ENCODE measurements at regions of chr16 and their contacts with region 1.

Region 1: DNA sequence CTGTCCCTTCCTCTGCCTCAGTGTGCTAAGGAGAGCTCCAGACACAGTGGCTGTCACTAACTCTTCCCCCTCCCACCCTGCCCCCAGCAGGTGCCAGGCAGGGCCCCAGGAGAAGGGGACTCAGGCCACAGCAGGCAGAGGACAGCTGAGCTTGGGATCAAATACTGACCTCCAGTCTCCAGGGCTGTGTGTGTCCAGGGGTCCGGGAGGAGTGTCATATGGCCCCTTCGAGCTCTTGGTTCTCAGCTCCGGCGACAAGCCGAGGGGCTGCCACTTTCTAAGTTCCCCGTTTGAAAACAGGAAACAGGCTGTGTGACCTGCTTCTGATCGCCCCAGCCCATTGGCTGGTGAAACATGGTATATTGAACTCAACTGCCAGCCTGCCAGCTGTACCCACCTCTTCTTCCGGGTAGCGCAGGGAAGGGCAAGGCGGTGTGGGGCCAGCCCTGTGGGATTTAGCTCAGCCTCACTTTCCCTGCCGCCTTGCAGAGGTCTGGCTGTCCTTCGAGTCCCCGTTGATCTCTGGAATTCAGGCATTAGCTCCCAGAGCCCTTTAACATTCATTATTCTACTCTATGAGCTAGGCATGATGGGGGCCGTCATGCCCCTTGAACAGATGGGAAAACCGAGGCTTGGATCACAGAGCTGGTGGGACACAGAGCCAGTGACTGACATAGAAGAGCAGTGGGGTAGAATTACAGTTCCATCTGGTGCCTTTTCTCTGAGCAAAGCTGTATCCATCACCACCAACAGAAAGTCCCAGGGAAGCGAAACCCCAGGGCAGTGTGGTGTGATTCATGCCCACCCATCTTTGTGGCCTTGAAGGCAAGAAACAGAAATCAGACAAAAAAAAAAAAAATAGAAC is at the start of gene SNX20:
- DNase-seq: peak; percentile 49
- ATAC-seq: peak; percentile 78
- H3K4me3 Mint-ChIP-seq: peak within 1 kb of the TSS; percentile 86
- H3K27ac Mint-ChIP-seq: peak within 1 kb of the TSS; percentile 93
- H3K4me1 Mint-ChIP-seq: peaks cover 79% of the 10 kb centered on the region
- H3K27me3 Mint-ChIP-seq: no peaks in the 10 kb centered on the region
- CTCF ChIP-seq: no peak
- total RNA-seq, gene SNX20: 33.1 and 34.5 TPM in 2 replicates

Region 2: GRCh38 chr16:50281964-50282538 is 399.2 kb before region 1 on chr16:
- CTCF ChIA-PET with region 1: no interaction called
- POLR2A ChIA-PET with region 1: no interaction called
- intact Hi-C with region 1: loop called (anchors 5 kb)
- DNase-seq: peak; percentile 74
- ATAC-seq: peak; percentile 86
- H3K4me3 Mint-ChIP-seq: peak overlapping the region; percentile 69
- H3K27ac Mint-ChIP-seq: peak overlapping the region; percentile 100
- H3K4me1 Mint-ChIP-seq: peaks cover 90% of the 10 kb centered on the region
- H3K27me3 Mint-ChIP-seq: no peaks in the 10 kb centered on the region
- CTCF ChIP-seq: no peak

Region 3: DNA sequence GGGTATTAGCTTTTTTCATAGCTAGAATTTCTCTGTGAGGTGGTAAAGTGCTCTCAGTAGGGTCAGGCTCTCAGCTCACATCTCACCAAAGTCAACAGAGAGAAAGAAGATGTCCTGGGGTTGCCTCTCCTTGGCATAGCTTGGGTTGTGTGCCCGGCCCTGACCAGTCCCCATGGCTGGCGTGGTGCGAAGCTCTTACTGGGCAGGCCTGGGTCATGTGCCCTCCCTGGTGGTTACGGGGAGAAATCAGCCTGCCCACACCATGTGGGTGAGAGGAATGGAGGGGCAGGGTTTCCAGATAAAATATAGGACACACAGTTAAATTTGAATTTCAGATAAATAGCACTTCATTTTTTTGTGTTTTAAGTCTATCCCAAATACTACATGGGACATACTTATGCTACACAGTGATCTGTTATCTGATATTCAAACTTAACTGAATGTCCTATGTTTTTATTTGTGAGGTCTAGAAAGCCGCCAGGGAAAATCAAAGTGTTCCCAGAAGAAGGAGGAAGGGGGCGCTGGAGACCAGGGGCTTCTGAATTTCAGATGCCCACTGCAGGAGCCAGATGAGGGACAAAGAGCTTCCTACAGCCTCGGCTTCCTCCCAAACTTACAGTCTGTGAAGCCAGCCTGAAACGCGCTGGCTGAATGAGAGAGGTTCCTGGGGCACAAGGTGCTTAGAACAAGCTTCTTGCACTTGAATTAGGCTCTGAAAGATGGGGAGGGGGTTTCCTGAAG is 87.7 kb before region 1 on chr16:
- CTCF ChIA-PET with region 1: no interaction called
- POLR2A ChIA-PET with region 1: interaction called, 9 read pairs
- intact Hi-C with region 1: loop called (anchors 1 kb)
- DNase-seq: no peak
- ATAC-seq: no peak
- H3K4me3 Mint-ChIP-seq: no peak overlapping the region
- H3K27ac Mint-ChIP-seq: no peak overlapping the region
- H3K4me1 Mint-ChIP-seq: peaks cover 17% of the 10 kb centered on the region
- H3K27me3 Mint-ChIP-seq: no peaks in the 10 kb centered on the region
- CTCF ChIP-seq: no peak

Region 4: GRCh38 chr16:50665128-50665878 is 15.9 kb before region 1 on chr16:
- CTCF ChIA-PET with region 1: interaction called, 45 read pairs
- POLR2A ChIA-PET with region 1: interaction called, 36 read pairs
- intact Hi-C with region 1: loop called (anchors 2 kb)
- DNase-seq: peak; percentile 68
- ATAC-seq: peak; percentile 70
- H3K4me3 Mint-ChIP-seq: peak overlapping the region; percentile 81
- H3K27ac Mint-ChIP-seq: peak overlapping the region; percentile 65
- H3K4me1 Mint-ChIP-seq: peaks cover 23% of the 10 kb centered on the region
- H3K27me3 Mint-ChIP-seq: no peaks in the 10 kb centered on the region
- CTCF ChIP-seq: no peak

Region 5: DNA sequence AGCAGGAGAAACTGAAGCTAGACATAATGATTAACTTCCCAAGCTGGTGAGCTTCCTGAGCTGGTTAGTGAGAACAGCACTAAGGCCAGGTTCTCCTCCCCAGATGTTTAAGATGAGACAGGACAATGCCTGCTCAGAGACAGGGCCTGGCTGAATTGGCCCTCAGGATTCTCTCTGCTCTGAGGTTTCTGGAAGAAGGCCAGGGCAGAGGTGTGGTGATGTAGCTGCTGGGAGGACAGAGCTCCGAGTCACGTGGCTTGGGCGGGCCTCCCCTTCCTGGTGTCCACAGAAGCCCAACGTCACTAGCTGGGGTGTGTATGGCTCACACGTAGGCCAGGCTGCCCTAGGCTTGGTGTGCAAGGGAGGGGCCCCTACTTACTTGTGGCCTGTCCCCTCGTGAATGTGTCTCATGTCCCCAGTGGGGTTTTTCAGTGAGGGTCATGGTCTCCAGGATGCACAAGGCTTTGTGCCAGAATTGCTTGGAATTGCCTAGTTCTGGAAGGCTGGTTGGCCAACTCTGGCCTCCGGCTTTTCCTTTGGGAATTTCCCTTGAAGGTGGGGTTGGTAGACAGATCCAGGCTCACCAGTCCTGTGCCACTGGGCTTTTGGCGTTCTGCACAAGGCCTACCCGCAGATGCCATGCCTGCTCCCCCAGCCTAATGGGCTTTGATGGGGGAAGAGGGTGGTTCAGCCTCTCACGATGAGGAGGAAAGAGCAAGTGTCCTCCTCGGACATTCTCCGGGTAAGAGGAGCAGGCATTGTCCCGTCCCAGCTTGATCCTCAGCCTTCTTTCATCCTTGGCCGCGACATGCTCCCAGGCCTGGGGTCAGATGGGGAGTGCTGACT is 15.5 kb after region 1 on chr16:
- CTCF ChIA-PET with region 1: no interaction called
- POLR2A ChIA-PET with region 1: interaction called, 34 read pairs
- intact Hi-C with region 1: loop called (anchors 1 kb)
- DNase-seq: no peak
- ATAC-seq: no peak
- H3K4me3 Mint-ChIP-seq: no peak overlapping the region
- H3K27ac Mint-ChIP-seq: peak overlapping the region; percentile 87
- H3K4me1 Mint-ChIP-seq: peaks cover 76% of the 10 kb centered on the region
- H3K27me3 Mint-ChIP-seq: peaks cover 4% of the 10 kb centered on the region
- CTCF ChIP-seq: no peak

Region 6: GRCh38 chr16:50747207-50747956 is 66.1 kb after region 1 on chr16:
- CTCF ChIA-PET with region 1: interaction called, 10 read pairs
- POLR2A ChIA-PET with region 1: interaction called, 19 read pairs
- intact Hi-C with region 1: loop called (anchors 1 kb)
- DNase-seq: no peak
- ATAC-seq: peak; percentile 61
- H3K4me3 Mint-ChIP-seq: peak overlapping the region; percentile 45
- H3K27ac Mint-ChIP-seq: peak overlapping the region; percentile 11
- H3K4me1 Mint-ChIP-seq: peaks cover 53% of the 10 kb centered on the region
- H3K27me3 Mint-ChIP-seq: no peaks in the 10 kb centered on the region
- CTCF ChIP-seq: no peak